CD8-positive, alpha-beta T cell (primary cell): ENCODE measurements at regions of chr5 and their contacts with region 1.

Region 1: DNA sequence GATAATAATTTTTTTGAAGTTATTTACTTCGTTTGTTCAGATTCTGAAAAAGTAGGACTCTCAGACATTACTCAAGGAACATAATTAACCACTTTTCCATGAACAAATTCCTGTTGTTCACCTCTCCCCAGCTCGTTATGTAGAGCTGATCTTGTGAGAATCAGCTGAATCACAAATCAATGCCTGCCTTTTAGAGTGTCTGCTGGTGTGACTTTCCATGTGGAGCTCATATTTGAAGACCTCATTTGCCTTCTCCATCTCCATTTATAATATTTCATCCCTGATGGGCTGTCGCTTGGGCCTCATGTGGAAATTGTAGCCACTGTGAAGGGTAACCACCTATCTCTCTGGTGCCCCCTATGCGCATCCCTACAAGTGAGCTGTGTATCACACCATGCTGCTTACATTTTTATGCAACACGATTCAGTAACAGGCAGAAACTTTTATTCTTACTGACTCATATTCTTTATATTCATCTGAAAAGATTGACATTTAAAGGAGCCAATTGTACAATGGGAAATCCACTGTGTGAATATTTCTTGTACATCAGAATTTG is 111.3 kb downstream of the STK32A start:
- DNase-seq: no peak
- ATAC-seq: no peak
- H3K4me3 ChIP-seq: no peak overlapping the region
- H3K4me3 Mint-ChIP-seq: no peak overlapping the region
- H3K27ac ChIP-seq: no peak overlapping the region
- H3K27ac Mint-ChIP-seq: no peak overlapping the region
- H3K4me1 ChIP-seq: no peaks in the 10 kb centered on the region
- H3K4me1 Mint-ChIP-seq: no peaks in the 10 kb centered on the region
- H3K27me3 ChIP-seq: no peaks in the 10 kb centered on the region
- H3K27me3 Mint-ChIP-seq: peaks cover 2% of the 10 kb centered on the region
- CTCF ChIP-seq: no peak

Region 2: DNA sequence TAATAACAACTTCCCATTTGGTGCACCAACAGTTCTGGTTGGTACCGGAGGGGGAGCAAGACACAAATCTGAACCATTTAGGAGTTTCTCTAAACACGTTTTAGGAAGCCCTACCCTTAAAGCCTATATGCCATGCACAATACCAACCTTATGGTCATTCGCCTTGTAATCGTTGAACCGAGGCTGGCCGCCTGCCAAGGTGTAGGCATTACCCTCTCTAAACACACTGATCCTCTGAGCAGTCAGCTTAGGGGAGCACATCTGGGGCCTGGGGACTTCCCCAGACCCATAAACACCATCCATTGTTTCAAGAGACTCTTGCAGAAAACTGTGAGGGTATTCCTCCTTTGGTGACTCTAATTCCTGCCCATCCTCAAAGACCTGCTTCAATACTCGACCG is 1473.6 kb before region 1 on chr5:
- CTCF ChIA-PET with region 1: no interaction called
- POLR2A ChIA-PET with region 1: no interaction called
- intact Hi-C with region 1: loop called in 1 of 2 experiments (anchors 5 kb)
- DNase-seq: no peak
- ATAC-seq: no peak
- H3K4me3 ChIP-seq: no peak overlapping the region
- H3K4me3 Mint-ChIP-seq: no peak overlapping the region
- H3K27ac ChIP-seq: no peak overlapping the region
- H3K27ac Mint-ChIP-seq: no peak overlapping the region
- H3K4me1 ChIP-seq: no peaks in the 10 kb centered on the region
- H3K4me1 Mint-ChIP-seq: no peaks in the 10 kb centered on the region
- H3K27me3 ChIP-seq: no peaks in the 10 kb centered on the region
- H3K27me3 Mint-ChIP-seq: peaks cover 13% of the 10 kb centered on the region
- CTCF ChIP-seq: no peak

Region 3: GRCh38 chr5:147382776-147383175 is 36.7 kb after region 1 on chr5:
- CTCF ChIA-PET with region 1: no interaction called
- POLR2A ChIA-PET with region 1: no interaction called
- intact Hi-C with region 1: no loop called
- DNase-seq: no peak
- ATAC-seq: no peak
- H3K4me3 ChIP-seq: no peak overlapping the region
- H3K4me3 Mint-ChIP-seq: no peak overlapping the region
- H3K27ac ChIP-seq: no peak overlapping the region
- H3K27ac Mint-ChIP-seq: no peak overlapping the region
- H3K4me1 ChIP-seq: no peaks in the 10 kb centered on the region
- H3K4me1 Mint-ChIP-seq: no peaks in the 10 kb centered on the region
- H3K27me3 ChIP-seq: no peaks in the 10 kb centered on the region
- H3K27me3 Mint-ChIP-seq: peaks cover 10% of the 10 kb centered on the region
- CTCF ChIP-seq: no peak